OCI-LY7 (cell line): ENCODE measurements at regions of chr1 and their contacts with region 1.

Region 1: GRCh38 chr1:226121587-226122400 is 59.3 kb downstream of the H3-3A start:
- DNase-seq: peak; percentile 92
- H3K4me3 ChIP-seq: peak overlapping the region; percentile 75
- H3K27ac ChIP-seq: peak overlapping the region; percentile 95
- H3K4me1 ChIP-seq: peaks cover 62% of the 10 kb centered on the region
- CTCF ChIP-seq: peak; percentile 75

Region 2: DNA sequence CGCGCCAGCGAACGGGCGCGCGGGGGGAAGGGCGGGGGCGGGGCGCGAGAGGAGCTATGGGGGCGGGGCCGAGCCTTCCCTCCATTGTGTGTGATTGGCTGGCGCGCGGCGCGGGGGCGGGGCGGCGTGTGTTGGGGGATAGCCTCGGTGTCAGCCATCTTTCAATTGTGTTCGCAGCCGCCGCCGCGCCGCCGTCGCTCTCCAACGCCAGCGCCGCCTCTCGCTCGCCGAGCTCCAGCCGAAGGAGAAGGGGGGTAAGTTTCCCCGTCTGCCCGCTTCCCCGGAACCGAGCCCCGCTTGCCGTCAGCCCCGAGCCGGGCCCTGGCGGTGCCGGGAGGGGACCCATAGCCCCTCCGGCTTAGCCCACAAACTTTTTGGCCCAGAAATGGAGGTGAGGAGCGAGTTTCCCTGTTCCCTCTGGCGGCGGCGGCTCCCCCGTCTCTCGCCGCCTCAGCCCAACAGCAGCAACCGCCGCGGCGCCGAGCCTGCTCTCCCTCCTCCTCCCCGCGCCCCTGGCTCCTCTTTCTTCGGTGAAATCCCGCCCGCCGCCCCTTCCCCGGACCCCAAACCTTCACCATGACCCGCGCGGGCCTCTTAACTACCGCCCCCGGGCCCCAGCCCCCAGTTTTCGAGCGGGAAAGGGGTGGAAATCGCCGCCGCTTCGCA is 59.1 kb before region 1 on chr1 and contains the start of gene H3-3A:
- CTCF ChIA-PET with region 1: interaction called, 10 read pairs
- POLR2A ChIA-PET with region 1: interaction called, 7 read pairs
- intact Hi-C with region 1: loop called (anchors 1 kb)
- DNase-seq: peak; percentile 96
- H3K4me3 ChIP-seq: peak within 1 kb of the TSS; percentile 89
- H3K27ac ChIP-seq: peak within 1 kb of the TSS; percentile 92
- H3K4me1 ChIP-seq: peaks cover 33% of the 10 kb centered on the region
- CTCF ChIP-seq: 0 out of 2 replicates have a peak, but pooled peaks have one; percentile 22
- total RNA-seq, gene H3-3A: 365 and 416 TPM in 2 replicates

Region 3: GRCh38 chr1:226149806-226150205 is 28.0 kb after region 1 on chr1:
- CTCF ChIA-PET with region 1: interaction called, 14 read pairs
- POLR2A ChIA-PET with region 1: interaction called, 12 read pairs
- intact Hi-C with region 1: no loop called
- DNase-seq: peak; percentile 50
- H3K4me3 ChIP-seq: no peak overlapping the region
- H3K27ac ChIP-seq: no peak overlapping the region
- H3K4me1 ChIP-seq: peaks cover 26% of the 10 kb centered on the region
- CTCF ChIP-seq: peak; percentile 40; the same call in 1 of the 2 replicates

Region 4: DNA sequence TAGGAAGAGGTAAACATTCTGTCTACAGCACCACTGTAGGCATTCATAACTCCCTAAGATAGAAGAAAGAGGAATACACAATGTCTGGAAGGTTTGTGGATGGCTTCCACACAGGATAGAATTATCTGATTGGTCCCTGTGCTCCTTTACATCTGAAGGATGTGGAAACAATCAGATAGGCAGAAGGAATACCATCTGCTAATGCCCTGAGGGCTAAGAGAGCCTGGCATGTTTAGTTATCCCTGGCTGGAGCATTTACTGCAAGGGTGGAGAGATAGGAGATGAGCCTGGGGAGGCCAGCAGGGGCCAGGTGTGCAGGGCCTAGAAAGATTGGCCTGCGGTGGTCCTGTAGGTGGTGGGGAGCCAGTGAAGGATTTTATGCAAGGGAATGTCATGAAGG is 73.3 kb after region 1 on chr1:
- CTCF ChIA-PET with region 1: interaction called, 44 read pairs
- POLR2A ChIA-PET with region 1: interaction called, 50 read pairs
- intact Hi-C with region 1: loop called (anchors 1 kb)
- DNase-seq: no peak
- H3K4me3 ChIP-seq: no peak overlapping the region
- H3K27ac ChIP-seq: no peak overlapping the region
- H3K4me1 ChIP-seq: peaks cover 10% of the 10 kb centered on the region
- CTCF ChIP-seq: no peak

Region 5: GRCh38 chr1:226332947-226333346 is 211.2 kb after region 1 on chr1:
- CTCF ChIA-PET with region 1: interaction called, 8 read pairs
- POLR2A ChIA-PET with region 1: interaction called, 31 read pairs
- intact Hi-C with region 1: loop called (anchors 1 kb)
- DNase-seq: peak; percentile 40
- H3K4me3 ChIP-seq: peak overlapping the region; percentile 55
- H3K27ac ChIP-seq: peak overlapping the region; percentile 69
- H3K4me1 ChIP-seq: peaks cover 62% of the 10 kb centered on the region
- CTCF ChIP-seq: no peak

Region 6: GRCh38 chr1:226547754-226548191 is 426.0 kb after region 1 on chr1:
- CTCF ChIA-PET with region 1: no interaction called
- POLR2A ChIA-PET with region 1: no interaction called
- intact Hi-C with region 1: loop called (anchors 1 kb)
- DNase-seq: peak; percentile 86
- H3K4me3 ChIP-seq: no peak overlapping the region
- H3K27ac ChIP-seq: no peak overlapping the region
- H3K4me1 ChIP-seq: peaks cover 20% of the 10 kb centered on the region
- CTCF ChIP-seq: peak; percentile 96